ENCODE measurements at regions of chr2 and their contacts with region 1.

Region 1: GRCh38 chr2:174748948-174749347 is 15.3 kb downstream of the CHRNA1 start:
- DNase-seq: peak; percentile 80
- H3K4me3 Mint-ChIP-seq: no peak overlapping the region
- H3K27ac Mint-ChIP-seq: no peak overlapping the region
- H3K4me1 Mint-ChIP-seq: peaks cover 35% of the 10 kb centered on the region
- H3K27me3 Mint-ChIP-seq: peaks cover 6% of the 10 kb centered on the region

Region 2: DNA sequence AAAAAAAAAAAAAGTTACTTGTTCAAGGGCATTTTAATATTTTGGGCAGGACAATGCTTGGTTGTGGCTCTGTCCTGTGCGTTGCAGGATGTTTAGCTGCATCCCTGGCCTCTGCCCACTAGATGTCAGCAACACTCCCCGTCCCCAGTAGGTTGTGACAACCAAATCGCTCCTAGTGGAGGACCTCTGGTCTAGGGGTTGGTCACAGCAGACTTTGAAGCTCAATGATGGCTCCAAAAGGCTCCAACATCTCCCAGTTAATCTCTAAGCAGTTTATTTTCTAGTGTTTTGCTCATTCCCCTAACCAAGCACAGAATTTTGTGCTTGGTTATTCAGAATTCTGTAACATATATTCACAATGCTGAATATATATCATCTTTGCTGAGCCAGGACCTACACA is 51.7 kb before region 1 on chr2:
- CTCF ChIA-PET with region 1: interaction called, 10 read pairs
- POLR2A ChIA-PET with region 1: no interaction called
- DNase-seq: peak; percentile 76
- H3K4me3 Mint-ChIP-seq: no peak overlapping the region
- H3K27ac Mint-ChIP-seq: no peak overlapping the region
- H3K4me1 Mint-ChIP-seq: no peaks in the 10 kb centered on the region
- H3K27me3 Mint-ChIP-seq: peaks cover 24% of the 10 kb centered on the region

Region 3: GRCh38 chr2:174764280-174765255 is 15.6 kb after region 1 on chr2 and contains the start of gene CHRNA1:
- CTCF ChIA-PET with region 1: interaction called, 11 read pairs
- POLR2A ChIA-PET with region 1: no interaction called
- DNase-seq: no peak
- H3K4me3 Mint-ChIP-seq: no peak within 1 kb of the TSS
- H3K27ac Mint-ChIP-seq: no peak within 1 kb of the TSS
- H3K4me1 Mint-ChIP-seq: peaks cover 7% of the 10 kb centered on the region
- H3K27me3 Mint-ChIP-seq: peaks cover 7% of the 10 kb centered on the region
- total RNA-seq, gene CHRNA1: not detected

Region 4: DNA sequence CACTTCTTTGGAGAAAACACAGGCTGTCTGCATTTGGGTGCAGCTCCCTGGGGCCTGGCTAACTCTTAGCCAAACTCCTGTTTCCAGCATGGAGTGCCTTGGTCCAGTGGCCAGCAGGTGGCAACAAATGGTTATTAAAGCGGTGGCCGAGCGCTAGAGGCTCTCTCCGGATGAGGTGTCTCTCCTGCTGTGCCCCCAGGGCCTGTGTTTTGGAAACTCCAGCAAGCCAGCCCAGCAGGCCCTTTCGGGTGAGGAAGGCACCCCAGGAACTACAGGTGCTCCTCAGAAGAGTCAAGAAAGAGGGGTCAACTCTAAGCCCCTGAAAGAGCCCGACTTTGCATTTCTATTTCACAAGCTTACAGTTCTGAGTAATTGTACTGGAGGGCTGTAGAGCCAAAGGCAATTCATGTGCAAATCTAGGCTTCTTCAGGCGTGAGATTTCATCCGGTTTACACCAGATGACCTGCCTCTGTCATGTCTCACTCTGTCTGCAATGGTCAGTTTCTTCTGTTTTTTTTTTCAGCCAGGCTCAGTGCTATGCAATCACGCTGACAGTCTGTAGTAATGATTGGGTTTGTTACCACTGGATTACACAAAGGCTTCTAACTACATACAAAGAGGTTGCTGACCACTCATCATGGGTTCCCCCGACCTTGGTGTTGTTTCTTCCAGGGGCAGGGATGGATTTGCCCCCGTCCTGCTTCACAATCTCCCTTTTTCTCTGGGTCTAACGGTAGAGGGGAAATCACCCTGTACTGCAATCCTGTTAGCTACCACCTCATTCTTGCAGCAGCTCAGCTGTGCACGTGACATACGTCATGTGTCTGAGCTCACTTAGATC is 22.9 kb after region 1 on chr2:
- CTCF ChIA-PET with region 1: interaction called, 11 read pairs
- POLR2A ChIA-PET with region 1: no interaction called
- DNase-seq: peak; percentile 51
- H3K4me3 Mint-ChIP-seq: no peak overlapping the region
- H3K27ac Mint-ChIP-seq: no peak overlapping the region
- H3K4me1 Mint-ChIP-seq: peaks cover 18% of the 10 kb centered on the region
- H3K27me3 Mint-ChIP-seq: peaks cover 6% of the 10 kb centered on the region

Region 5: DNA sequence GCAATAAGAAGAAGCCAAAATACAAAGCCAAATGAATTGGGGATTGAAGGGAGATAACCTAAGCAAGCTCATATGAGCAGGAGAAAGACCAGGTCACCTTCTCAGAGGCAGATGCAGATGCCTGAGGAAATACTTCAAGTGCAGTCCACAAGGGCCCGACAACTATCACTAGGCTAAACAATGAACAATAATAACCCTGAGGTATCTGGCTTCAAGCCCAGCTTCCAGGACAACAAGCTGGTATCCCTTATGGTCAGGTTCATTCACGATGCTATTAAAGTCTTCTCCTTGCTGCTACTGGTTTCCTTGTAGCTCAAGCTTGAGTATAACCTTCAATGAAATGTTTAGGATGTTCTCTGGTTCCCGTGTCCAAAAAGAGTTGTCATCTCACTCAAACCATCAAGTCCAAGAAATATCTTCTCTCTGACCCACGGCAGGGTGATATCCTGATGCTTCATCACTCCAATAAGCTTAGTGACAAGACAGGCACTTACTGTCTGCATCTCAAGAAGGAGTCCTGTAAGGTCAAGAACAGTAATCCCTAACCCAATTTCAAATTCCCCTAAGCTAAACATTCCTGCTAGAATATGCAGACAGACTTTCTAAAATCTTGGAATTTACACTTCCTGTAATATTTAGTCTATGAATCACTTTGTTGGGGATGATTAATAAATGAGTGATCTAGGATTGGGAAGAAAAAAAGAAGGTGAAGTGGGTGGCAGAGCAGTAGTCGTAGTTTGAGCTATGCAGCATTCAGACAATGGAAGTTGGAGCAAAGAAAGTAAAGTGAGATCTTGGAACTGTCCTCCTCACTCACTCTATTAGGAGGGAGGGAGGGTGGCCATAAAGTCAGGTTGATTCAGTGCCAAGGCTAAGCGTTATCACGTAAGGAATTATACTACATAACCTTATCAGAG is 223.2 kb after region 1 on chr2:
- CTCF ChIA-PET with region 1: no interaction called
- POLR2A ChIA-PET with region 1: no interaction called
- DNase-seq: no peak
- H3K4me3 Mint-ChIP-seq: no peak overlapping the region
- H3K27ac Mint-ChIP-seq: no peak overlapping the region
- H3K4me1 Mint-ChIP-seq: peaks cover 4% of the 10 kb centered on the region
- H3K27me3 Mint-ChIP-seq: no peaks in the 10 kb centered on the region